KBM-7 (cell line): ENCODE measurements at regions of chr9 and their contacts with region 1.

Region 1: DNA sequence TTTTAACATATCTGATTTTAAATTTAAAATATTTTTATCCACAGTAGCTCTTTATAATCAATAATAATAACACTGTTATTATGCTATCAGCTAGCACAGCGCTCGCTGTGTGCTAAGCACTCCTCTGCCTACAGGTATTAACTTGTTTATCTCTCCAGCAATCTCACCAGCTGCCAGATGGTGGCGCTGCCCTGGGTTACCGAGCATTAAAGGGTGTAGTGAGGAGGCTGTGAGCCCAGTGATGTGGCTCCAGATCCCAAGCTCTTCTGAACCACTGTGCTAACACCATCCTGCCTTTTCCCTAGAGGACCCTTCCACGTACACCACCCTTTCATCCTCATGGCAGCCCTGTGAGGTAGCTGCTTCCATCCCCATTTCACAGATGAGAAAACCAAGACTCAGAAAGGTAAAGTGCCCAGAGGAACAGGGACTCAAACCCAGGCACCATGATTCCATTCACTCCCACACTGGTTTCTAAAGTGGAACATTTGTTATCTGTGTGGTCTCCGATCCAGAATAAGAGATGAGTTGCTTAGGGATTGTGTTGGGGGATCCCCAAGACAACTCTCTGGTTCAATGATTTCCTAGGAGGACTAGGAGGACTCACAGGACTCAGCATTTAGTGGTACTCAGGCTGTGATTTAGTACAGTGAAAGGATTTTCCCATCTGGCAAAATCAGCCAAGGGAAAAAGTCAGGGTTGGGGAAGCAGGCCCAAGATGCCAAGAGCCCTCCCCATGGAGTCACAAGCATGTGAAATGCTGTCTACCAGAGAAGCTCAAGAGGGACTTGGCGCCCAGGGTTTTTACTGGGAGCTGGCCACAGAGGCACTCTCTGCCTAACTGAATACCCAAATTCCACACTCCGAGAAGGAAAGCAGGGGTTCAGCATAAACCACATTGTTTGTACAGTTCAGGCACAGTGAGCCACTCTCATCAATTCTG is 7.0 kb downstream of the IGFBPL1 start:
- DNase-seq: peak; percentile 28

Region 2: GRCh38 chr9:38687387-38687842 is 270.1 kb after region 1 on chr9:
- in situ Hi-C with region 1: loop called (anchors 25 kb)
- DNase-seq: no peak